Colonic mucosa (tissue), 4 donors: ENCODE measurements at regions of chr9 and their contacts with region 1.

Region 1: GRCh38 chr9:76996700-76997099 is 22.8 kb upstream of the FOXB2 start:
- DNase-seq: no peak
- H3K4me3 ChIP-seq: no peak overlapping the region
- H3K27ac ChIP-seq: no peak overlapping the region
- H3K4me1 ChIP-seq: no peaks in the 10 kb centered on the region
- H3K27me3 ChIP-seq: peaks cover 2% of the 10 kb centered on the region
- CTCF ChIP-seq: peak; percentile 45

Region 2: GRCh38 chr9:76704593-76705204 is 292.0 kb before region 1 on chr9:
- intact Hi-C with region 1: no loop called
- DNase-seq: no peak
- H3K4me3 ChIP-seq: no peak overlapping the region
- H3K27ac ChIP-seq: no peak overlapping the region
- H3K4me1 ChIP-seq: no peaks in the 10 kb centered on the region
- H3K27me3 ChIP-seq: no peaks in the 10 kb centered on the region
- CTCF ChIP-seq: peak; percentile 50

Region 3: DNA sequence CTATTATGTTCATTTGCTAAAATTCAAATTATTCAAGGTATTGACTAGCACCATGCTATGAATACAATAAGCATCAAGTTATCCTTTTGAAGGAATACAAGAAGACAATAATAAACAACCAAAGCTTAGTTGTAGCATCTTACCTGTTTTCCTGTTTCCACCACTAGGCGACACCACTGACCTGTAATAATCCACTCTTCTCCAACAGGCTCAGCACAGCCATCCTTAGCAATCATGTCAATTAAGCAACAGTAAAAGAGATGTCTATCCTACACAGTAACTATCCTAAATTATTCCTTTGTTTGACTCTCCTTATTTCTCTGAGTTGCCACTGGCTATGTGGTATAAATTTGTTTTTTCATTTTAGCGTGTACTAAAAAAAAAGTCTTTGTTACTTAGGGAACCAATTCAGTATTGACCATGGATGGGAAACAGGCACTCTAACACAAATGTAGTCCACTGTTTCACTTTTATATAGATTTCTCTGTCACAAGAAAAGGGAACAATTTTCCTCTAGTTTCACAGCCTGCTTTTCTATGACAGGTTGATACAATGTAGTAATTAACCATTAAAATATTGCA is 186.2 kb before region 1 on chr9:
- intact Hi-C with region 1: loop called (anchors 5 kb)
- DNase-seq: peak; percentile 61
- H3K4me3 ChIP-seq: no peak overlapping the region
- H3K27ac ChIP-seq: no peak overlapping the region
- H3K4me1 ChIP-seq: no peaks in the 10 kb centered on the region
- H3K27me3 ChIP-seq: no peaks in the 10 kb centered on the region
- CTCF ChIP-seq: peak; percentile 50